Endothelial cell of umbilical vein (primary cell): ENCODE measurements at regions of chr13 and their contacts with region 1.

Region 1: GRCh38 chr13:75694722-75695121 is 58.6 kb downstream of the LMO7 start:
- DNase-seq: no peak
- H3K4me3 ChIP-seq: no peak overlapping the region
- H3K27ac ChIP-seq: no peak overlapping the region
- H3K4me1 ChIP-seq: no peaks in the 10 kb centered on the region
- H3K27me3 ChIP-seq: no peaks in the 10 kb centered on the region
- CTCF ChIP-seq: no peak
- POLR2A ChIP-seq: no peak

Region 2: DNA sequence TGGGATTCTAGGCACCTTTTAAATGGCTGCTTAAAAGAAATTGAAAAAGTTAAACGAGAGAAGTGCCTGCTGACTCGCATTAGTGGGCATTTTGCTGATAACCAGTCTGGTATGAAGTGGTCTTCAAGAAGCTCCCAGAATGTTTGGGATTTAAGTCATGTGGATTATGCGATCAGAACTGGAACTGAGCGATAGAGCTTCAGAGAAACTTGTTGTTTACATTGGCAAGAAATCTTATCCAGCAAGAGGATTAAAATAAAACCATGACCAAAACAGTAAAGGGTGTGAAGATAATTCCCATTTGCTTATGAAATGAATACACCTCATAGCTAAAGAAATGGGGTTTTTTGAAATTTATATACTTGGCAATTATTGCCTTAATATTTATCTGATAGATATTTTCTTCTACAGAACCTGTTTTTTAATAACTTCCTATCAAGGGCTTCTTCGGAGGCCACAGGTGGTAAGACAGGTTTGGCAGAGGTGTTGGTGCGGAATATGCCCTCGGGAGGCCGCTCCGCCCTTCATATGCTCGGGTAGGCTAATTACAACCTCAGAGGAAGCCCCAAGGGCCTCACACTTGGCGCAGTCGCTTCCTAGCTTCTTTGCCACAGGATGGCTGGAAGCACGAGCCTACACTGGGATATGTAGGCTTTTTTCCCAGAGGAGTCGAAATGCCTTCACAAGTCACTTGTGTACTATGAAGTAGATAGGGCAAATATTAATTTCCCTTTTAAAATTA is 10.0 kb after region 1 on chr13:
- CTCF ChIA-PET with region 1: interaction called, 47 read pairs
- POLR2A ChIA-PET with region 1: no interaction called
- dilution Hi-C with region 1: no loop called
- intact Hi-C with region 1: no loop called
- DNase-seq: peak; percentile 57
- H3K4me3 ChIP-seq: no peak overlapping the region
- H3K27ac ChIP-seq: peak overlapping the region; percentile 73
- H3K4me1 ChIP-seq: peaks cover 22% of the 10 kb centered on the region
- H3K27me3 ChIP-seq: no peaks in the 10 kb centered on the region
- CTCF ChIP-seq: no peak
- POLR2A ChIP-seq: no peak

Region 3: GRCh38 chr13:75789206-75790197 is 94.8 kb after region 1 on chr13:
- CTCF ChIA-PET with region 1: interaction called, 13 read pairs
- POLR2A ChIA-PET with region 1: no interaction called
- dilution Hi-C with region 1: no loop called
- intact Hi-C with region 1: no loop called
- DNase-seq: peak; percentile 12
- H3K4me3 ChIP-seq: no peak overlapping the region
- H3K27ac ChIP-seq: peak overlapping the region; percentile 42
- H3K4me1 ChIP-seq: peaks cover 21% of the 10 kb centered on the region
- H3K27me3 ChIP-seq: no peaks in the 10 kb centered on the region
- CTCF ChIP-seq: no peak
- POLR2A ChIP-seq: no peak

Region 4: DNA sequence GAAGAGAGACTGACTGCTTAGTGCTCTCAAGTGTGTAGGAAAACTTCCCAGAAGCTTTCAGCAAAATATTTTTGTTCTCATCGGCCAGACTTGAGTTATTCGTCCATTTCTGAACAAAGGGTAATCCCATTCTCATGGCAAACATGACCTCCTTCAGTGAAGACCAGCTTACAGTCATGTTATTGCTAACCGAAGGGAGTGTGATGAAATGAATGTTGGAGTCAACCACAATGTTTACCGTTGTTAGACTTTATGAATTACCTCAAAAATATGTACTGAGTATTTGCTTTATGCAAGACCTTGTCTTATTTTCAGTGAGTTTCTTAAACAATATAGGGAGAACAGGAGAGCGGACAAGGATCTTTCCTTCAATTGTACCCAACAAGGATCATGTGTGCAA is 170.0 kb after region 1 on chr13:
- CTCF ChIA-PET with region 1: interaction called, 134 read pairs
- POLR2A ChIA-PET with region 1: no interaction called
- dilution Hi-C with region 1: no loop called
- intact Hi-C with region 1: no loop called
- DNase-seq: no peak
- H3K4me3 ChIP-seq: no peak overlapping the region
- H3K27ac ChIP-seq: no peak overlapping the region
- H3K4me1 ChIP-seq: no peaks in the 10 kb centered on the region
- H3K27me3 ChIP-seq: no peaks in the 10 kb centered on the region
- CTCF ChIP-seq: no peak
- POLR2A ChIP-seq: no peak

Region 5: DNA sequence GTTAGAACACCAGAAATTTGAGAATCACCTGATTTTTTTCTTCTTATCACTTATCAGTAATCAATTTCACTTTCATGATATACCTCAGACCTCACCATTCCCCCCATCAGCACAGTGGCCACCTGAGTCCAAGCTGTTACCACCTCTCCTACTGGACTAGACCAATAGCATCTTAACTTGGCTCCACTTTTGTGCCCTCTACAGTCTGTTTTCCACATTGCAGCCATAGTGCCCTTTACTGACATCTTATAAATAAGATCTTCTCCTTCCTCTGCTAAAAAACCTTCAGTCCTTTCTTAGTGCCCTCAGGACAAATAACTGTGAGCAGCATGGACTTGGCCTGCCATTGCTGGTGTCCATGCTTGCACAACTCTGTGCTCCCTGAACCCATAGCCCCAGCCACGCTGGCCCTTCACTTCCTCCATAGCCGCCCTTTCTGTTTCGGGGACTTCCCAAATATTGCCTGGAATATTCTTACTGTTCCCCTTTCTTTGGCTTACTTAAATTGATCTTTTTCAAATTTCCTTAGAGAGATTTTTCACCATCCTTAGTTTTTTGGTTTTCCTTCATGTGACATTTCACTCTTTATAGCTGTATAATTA is 322.2 kb after region 1 on chr13:
- CTCF ChIA-PET with region 1: interaction called, 38 read pairs
- POLR2A ChIA-PET with region 1: no interaction called
- dilution Hi-C with region 1: no loop called
- intact Hi-C with region 1: loop called (anchors 1 kb)
- DNase-seq: peak; percentile 52
- H3K4me3 ChIP-seq: no peak overlapping the region
- H3K27ac ChIP-seq: no peak overlapping the region
- H3K4me1 ChIP-seq: no peaks in the 10 kb centered on the region
- H3K27me3 ChIP-seq: peaks cover 0 to 2% of the 10 kb centered on the region in 2 experiments
- CTCF ChIP-seq: peak; percentile 44 to 53
- POLR2A ChIP-seq: no peak

Region 6: GRCh38 chr13:76980075-76980718 is 1285.5 kb after region 1 on chr13:
- CTCF ChIA-PET with region 1: interaction called, 11 read pairs
- POLR2A ChIA-PET with region 1: no interaction called
- dilution Hi-C with region 1: no loop called
- intact Hi-C with region 1: loop called (anchors 5 kb)
- DNase-seq: peak; percentile 52
- H3K4me3 ChIP-seq: no peak overlapping the region
- H3K27ac ChIP-seq: no peak overlapping the region
- H3K4me1 ChIP-seq: peaks cover 2% of the 10 kb centered on the region
- H3K27me3 ChIP-seq: peaks cover 16 to 24% of the 10 kb centered on the region in 2 experiments
- CTCF ChIP-seq: peak; percentile 95 to 100
- POLR2A ChIP-seq: no peak